Activated T-helper 1 cell treated with anti-CD3 and anti-CD28 coated beads, Interleukin-12 subunit alpha, Interleukin-12 subunit beta, Interleukin-2, Interleukin-4 antibody, amounts not matched to agents 30 ng/mL and 10 ng/mL and 1 ng/mL, durations not matched to agents 14 hours and 24 hours and 36 hours (primary cell): ENCODE measurements at regions of chr22 and their contacts with region 1.

Region 1: GRCh38 chr22:25067851-25068421 is 115.4 kb downstream of the KIAA1671 start:
- DNase-seq: peak; percentile 82
- H3K4me3 Mint-ChIP-seq: peak overlapping the region; percentile 94
- H3K27ac Mint-ChIP-seq: peak overlapping the region; percentile 99
- H3K4me1 Mint-ChIP-seq: peaks cover 83% of the 10 kb centered on the region
- H3K27me3 Mint-ChIP-seq: no peaks in the 10 kb centered on the region

Region 2: GRCh38 chr22:24601217-24602104 is 466.5 kb before region 1 on chr22:
- intact Hi-C with region 1: no loop called
- DNase-seq: no peak
- H3K4me3 Mint-ChIP-seq: no peak overlapping the region
- H3K27ac Mint-ChIP-seq: no peak overlapping the region
- H3K4me1 Mint-ChIP-seq: peaks cover 33% of the 10 kb centered on the region
- H3K27me3 Mint-ChIP-seq: no peaks in the 10 kb centered on the region

Region 3: GRCh38 chr22:25021976-25022711 is 45.8 kb before region 1 on chr22:
- intact Hi-C with region 1: no loop called
- DNase-seq: no peak
- H3K4me3 Mint-ChIP-seq: no peak overlapping the region
- H3K27ac Mint-ChIP-seq: no peak overlapping the region
- H3K4me1 Mint-ChIP-seq: peaks cover 23% of the 10 kb centered on the region
- H3K27me3 Mint-ChIP-seq: peaks cover 15% of the 10 kb centered on the region

Region 4: GRCh38 chr22:25110846-25111578 is 43.1 kb after region 1 on chr22:
- intact Hi-C with region 1: loop called (anchors 2 kb)
- DNase-seq: peak; percentile 30
- H3K4me3 Mint-ChIP-seq: peak overlapping the region; percentile 82
- H3K27ac Mint-ChIP-seq: peak overlapping the region; percentile 82
- H3K4me1 Mint-ChIP-seq: peaks cover 18% of the 10 kb centered on the region
- H3K27me3 Mint-ChIP-seq: peaks cover 2% of the 10 kb centered on the region

Region 5: GRCh38 chr22:25395915-25396314 is 328.0 kb after region 1 on chr22:
- intact Hi-C with region 1: loop called (anchors 5 kb)
- DNase-seq: no peak
- H3K4me3 Mint-ChIP-seq: no peak overlapping the region
- H3K27ac Mint-ChIP-seq: no peak overlapping the region
- H3K4me1 Mint-ChIP-seq: peaks cover 24% of the 10 kb centered on the region
- H3K27me3 Mint-ChIP-seq: no peaks in the 10 kb centered on the region